ENCODE measurements at regions of chr1 and their contacts with region 1.

Region 1: GRCh38 chr1:171984850-171985485 is 143.7 kb downstream of the DNM3 start:
- DNase-seq: peak; percentile 55

Region 2: DNA sequence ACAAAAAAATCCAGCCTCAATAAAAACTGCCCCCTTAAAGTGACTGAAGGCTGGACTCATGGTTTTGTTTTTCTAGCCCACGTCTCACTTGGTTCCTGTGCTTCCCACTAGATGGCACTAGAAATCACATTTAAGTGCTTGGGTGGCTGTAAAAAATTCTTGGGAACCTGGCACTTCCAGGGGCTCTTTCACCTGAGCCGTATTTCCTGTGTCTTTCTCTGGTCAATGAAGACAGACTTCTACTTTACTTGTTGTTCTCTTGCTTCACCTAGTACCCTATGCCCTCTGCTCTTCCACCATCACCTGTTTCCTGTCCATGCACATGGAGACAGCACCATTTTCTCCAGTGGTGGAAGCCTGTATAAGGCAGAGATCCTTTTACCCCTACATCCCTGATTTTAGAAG is 183.5 kb before region 1 on chr1:
- in situ Hi-C with region 1: loop called (anchors 25 kb)
- DNase-seq: peak; percentile 49

Region 3: DNA sequence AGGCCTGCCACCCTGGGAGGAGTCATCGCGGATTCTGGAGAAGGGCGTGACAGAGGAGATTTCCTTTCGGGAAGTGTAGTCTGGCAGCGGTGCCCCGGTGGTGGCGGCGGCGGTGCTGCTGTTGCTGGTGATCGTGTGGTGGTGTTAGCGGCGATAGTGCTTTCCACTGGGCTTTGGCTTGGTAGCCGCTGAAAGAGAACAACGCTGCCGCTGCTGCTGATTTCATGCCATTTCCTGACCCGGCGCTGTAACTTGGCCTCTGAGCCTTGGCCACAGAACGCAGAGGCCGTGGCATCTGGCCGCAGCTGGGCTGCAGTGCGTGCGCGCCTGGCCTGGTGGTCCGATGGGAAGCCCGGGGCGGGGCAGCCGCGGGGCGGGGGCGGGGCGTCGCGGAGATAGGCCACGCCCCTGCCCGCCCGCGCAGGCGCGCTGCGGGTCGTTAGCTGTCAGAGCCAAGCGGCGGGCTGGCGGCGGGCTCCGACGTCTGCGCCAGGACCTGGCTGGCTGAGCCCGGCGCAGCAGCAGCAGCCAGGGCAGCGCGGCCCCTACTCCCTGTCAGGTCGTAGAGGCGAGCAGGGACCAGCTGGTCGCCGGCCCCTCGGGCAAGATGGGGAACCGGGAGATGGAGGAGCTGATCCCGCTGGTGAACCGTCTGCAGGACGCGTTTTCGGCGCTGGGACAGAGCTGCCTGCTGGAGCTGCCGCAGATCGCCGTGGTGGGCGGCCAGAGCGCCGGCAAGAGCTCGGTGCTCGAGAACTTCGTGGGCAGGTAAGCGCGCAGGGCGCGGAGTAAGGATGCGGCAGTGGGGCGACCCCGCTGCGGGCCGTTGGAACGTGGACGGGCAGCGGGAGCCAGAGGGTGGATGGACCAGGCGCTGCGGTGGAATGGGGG is 143.7 kb before region 1 on chr1 and contains the start of gene DNM3:
- in situ Hi-C with region 1: no loop called
- DNase-seq: peak; percentile 62

Region 4: DNA sequence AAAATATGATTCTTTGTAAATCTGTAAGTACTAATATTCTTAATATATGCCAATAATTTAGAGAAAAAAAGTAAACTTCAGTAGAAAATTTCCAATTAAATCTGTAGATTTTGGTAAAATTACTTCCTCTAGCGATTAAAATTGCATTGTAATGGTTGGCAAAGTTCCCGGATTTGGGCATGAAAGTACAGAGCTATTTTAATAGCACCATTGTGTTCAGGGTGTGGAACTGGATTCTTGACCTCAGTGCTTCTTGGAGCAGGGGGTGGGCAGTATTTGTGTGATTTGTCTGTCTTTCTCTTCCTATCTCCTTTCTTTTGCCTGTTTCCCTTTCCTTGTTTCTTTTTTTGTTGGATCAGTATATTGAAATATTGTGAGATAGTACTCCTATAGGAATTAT is 71.6 kb before region 1 on chr1:
- in situ Hi-C with region 1: no loop called
- DNase-seq: no peak

Region 5: GRCh38 chr1:172041742-172042141 is 56.8 kb after region 1 on chr1:
- in situ Hi-C with region 1: no loop called
- DNase-seq: peak; percentile 19

Region 6: DNA sequence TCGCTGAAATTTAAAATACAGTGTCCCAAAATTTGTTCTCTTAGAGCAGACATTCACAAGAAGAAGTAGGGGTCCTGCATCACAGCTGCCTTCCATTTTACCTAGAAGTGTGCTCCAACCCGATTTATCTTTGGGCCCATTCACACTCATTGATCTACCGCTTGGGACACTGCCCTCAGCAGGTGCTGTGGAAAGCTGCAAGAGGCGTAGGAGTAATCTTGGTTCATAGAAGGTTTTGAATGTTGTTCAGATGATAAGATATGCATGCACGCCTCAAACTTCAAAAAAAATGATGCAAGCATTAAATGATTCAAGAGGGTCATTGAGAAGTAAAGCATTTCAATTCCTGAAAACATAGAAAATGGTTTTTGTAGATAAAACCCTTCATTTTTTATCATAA is 416.9 kb after region 1 on chr1:
- in situ Hi-C with region 1: loop called (anchors 25 kb)
- DNase-seq: no peak